PC-9 (cell line): ENCODE measurements at regions of chr1 and their contacts with region 1.

Region 1: GRCh38 chr1:98260839-98261238 is 340.0 kb upstream of the DPYD start:
- DNase-seq: no peak
- H3K4me3 ChIP-seq: no peak overlapping the region
- H3K27ac ChIP-seq: no peak overlapping the region
- H3K4me1 ChIP-seq: peaks cover 15% of the 10 kb centered on the region
- H3K27me3 ChIP-seq: no peaks in the 10 kb centered on the region
- CTCF ChIP-seq: no peak

Region 2: DNA sequence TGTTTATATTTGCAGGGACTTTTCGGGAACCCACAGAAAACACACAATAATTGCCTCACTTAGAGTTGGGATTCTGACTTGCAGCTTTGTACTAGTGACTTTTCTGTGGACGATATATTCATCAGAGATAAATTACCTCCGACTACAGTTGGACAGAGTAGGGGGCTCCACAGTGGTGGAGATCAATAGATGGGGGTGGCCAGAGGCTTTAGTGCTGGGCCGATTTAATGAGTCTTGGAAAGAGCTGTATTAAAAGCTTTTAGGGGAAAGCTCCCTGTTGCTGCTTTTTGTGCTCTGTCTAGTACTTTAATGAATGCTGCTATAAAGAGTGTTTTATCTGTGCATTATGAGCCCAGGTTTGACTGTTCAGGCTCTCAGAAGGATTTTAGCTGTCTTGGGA is 19.2 kb after region 1 on chr1:
- CTCF ChIA-PET with region 1: no interaction called
- POLR2A ChIA-PET with region 1: interaction called, 10 read pairs
- intact Hi-C with region 1: no loop called
- DNase-seq: no peak
- H3K4me3 ChIP-seq: no peak overlapping the region
- H3K27ac ChIP-seq: no peak overlapping the region
- H3K4me1 ChIP-seq: no peaks in the 10 kb centered on the region
- H3K27me3 ChIP-seq: no peaks in the 10 kb centered on the region
- CTCF ChIP-seq: no peak

Region 3: DNA sequence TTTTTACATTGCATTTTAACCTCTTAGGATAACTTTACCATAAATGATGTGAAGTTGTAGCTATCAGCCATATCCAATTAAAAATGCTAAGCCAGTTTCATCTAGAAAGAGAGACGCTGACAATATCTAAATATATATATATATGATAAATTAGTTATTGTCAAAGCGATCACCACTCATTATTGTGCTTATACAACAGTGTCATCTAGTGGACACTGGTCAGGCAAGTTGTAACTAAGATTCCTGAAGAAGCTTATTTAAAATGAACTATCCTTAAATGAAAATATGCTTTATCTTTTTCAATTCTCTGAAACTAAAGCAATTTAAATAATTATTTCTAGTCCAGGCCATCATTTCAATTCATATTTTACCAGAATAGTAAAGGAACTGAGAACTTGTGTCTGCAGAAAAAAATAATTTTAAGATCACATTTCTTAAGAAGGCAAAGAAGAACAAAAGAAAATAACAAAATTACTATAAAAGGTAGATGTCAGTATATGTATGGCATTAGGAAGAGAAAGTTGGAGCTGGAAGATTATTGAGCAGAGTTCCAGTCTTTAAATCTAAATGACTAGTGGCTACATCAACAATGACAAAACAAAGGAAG is 207.4 kb after region 1 on chr1:
- CTCF ChIA-PET with region 1: no interaction called
- POLR2A ChIA-PET with region 1: no interaction called
- intact Hi-C with region 1: loop called (anchors 2 kb)
- DNase-seq: peak; percentile 4 to 59
- H3K4me3 ChIP-seq: no peak overlapping the region
- H3K27ac ChIP-seq: no peak overlapping the region
- H3K4me1 ChIP-seq: no peaks in the 10 kb centered on the region
- H3K27me3 ChIP-seq: no peaks in the 10 kb centered on the region
- CTCF ChIP-seq: peak; percentile 98

Region 4: DNA sequence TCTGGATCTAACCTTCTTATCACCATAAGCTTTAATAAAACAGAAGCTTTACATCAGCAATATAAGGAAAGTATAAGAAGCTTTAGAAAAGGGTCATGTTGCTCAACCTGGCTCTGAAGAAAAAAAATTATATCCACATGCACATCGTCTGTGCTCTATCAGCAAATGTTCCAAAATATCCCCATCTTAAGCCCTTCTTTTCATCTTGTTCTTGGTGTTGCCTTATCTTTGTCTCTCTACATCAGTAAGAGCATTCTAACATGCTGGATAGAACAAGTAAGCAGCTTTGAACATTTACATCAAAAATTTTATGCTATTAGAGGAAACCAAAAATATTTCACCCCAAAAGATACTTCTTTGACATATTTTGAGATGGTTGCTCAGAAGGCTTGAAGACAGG is 242.9 kb after region 1 on chr1:
- CTCF ChIA-PET with region 1: no interaction called
- POLR2A ChIA-PET with region 1: no interaction called
- intact Hi-C with region 1: no loop called
- DNase-seq: no peak
- H3K4me3 ChIP-seq: no peak overlapping the region
- H3K27ac ChIP-seq: no peak overlapping the region
- H3K4me1 ChIP-seq: no peaks in the 10 kb centered on the region
- H3K27me3 ChIP-seq: no peaks in the 10 kb centered on the region
- CTCF ChIP-seq: no peak

Region 5: DNA sequence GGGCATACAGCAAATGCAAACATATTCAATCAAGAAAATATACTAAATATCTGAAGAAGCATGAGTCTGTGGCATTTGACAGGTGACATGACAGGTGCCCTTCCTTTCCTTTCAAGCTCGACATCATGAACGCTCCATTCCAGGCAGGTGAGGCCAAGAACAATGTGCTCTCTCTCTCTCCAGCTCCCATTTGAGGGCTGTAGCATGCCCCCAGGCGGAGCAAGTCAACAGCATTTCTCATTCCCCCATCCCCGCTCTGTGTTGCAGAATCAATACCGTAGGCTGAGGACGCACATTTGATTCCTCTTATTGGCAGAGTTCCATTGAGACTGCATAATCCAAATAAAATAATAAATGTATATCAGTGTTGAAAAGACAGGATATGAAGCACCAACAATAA is 978.9 kb after region 1 on chr1:
- CTCF ChIA-PET with region 1: no interaction called
- POLR2A ChIA-PET with region 1: no interaction called
- intact Hi-C with region 1: no loop called
- DNase-seq: no peak
- H3K4me3 ChIP-seq: no peak overlapping the region
- H3K27ac ChIP-seq: no peak overlapping the region
- H3K4me1 ChIP-seq: no peaks in the 10 kb centered on the region
- H3K27me3 ChIP-seq: no peaks in the 10 kb centered on the region
- CTCF ChIP-seq: no peak